ENCODE measurements at regions of chr15 and their contacts with region 1.

Region 1: DNA sequence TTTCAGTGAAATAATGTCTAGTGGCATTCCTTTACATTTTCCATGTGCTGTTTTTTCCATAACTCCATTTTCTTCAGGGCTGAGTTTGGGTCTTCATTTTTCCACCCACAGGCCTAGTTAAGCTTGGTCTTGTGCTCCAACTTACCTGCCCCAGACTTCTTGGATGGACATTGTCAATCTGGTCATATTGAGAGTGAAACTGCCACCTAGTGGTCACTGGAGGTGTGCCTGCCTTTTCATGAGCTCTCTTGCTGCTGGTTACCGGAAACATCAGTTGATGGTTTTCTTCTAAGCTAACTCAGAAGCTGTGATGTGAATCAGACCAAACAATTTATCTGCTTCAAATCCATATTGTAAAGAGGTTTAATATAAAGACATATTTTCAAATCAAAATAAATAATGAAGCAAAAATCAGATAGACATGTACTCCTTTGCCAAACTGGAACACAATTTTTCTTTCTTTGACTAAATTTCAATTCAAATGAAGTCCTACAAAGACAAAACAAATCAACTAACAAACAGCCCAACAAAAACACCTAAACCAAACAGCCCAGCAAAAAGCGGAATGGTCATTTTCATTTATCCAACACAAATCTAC is 135.1 kb upstream of the RASGRP1 start:
- DNase-seq: peak; percentile 77

Region 2: DNA sequence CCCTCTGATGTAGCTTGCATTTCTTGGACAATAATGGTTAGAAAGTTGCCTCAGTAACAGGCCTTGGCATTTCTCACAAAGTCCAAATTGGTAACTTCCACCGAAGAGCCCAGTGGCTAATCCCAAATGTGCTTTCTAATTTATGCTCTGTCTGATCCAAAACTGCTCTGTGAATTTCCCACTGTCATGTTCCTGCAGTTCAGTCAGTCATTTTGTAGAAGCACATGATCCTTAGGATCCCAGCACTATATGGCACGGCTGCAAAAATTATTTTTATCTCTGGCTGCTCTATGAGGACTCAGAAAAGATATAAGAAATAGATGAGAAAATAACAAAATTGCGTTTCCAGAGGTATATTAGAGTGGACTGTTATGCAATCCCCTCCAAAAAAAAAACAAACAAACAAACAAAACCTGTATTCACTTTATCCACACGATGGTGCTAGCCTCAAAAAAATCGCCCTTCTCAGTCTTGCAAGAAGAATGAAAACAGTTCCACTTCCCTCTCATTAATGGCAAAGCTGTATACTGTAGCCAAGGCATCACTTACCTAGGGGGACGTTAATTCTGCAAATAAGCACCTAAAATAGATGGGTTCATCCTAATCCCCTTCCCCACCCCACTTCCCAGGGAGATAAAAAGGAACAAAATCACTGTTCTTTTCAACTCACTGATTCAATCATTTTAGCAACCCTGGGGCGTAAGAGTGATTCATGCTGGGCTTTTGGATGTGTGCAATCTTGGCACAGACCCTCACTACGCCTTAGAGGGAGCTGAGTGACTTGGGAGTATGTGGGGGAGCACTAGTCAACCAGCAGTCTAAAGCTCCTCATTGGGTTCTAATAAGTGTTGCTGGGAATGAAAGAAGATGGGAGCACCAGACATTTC is 704.0 kb before region 1 on chr15:
- in situ Hi-C with region 1: loop called (anchors 25 kb)
- DNase-seq: peak; percentile 75

Region 3: GRCh38 chr15:38378161-38378560 is 321.6 kb before region 1 on chr15:
- in situ Hi-C with region 1: no loop called
- DNase-seq: peak; percentile 12

Region 4: DNA sequence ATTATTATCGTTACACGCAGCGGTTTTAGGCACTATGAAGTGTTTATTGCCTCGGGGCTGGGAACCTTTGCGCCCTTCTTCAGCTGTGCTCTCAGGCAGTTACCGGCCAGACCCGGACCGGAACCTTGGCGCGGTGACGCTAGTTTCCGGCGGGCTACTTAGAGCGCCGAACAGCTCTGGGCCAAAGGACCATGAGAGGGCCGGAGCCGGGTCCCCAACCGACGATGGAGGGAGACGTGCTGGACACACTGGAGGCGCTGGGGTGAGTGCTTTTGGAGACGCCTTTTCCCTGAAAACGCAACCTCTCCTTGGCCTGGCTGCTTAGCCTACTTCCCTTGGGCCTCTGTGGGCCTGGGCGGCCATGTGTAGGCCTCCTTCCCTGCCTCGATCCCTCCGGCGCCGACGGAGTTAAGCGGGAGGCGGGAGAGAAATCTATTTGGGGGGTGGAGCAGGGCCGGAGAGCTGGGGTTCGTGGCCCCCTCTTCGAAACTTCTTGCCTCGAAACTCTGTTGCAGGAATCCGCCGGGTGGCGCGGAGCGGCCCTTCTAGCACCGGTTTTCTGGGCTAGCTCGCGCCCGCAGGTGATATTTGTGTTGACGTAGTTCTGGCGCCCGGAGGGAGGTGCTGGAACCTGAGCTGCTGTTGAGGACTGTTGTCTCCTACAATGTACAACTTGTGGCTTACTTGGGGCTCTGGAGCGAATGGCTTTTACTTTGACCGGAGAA is 245.6 kb before region 1 on chr15 and contains the start of gene FAM98B:
- in situ Hi-C with region 1: loop called (anchors 25 kb)
- DNase-seq: peak; percentile 89

Region 5: DNA sequence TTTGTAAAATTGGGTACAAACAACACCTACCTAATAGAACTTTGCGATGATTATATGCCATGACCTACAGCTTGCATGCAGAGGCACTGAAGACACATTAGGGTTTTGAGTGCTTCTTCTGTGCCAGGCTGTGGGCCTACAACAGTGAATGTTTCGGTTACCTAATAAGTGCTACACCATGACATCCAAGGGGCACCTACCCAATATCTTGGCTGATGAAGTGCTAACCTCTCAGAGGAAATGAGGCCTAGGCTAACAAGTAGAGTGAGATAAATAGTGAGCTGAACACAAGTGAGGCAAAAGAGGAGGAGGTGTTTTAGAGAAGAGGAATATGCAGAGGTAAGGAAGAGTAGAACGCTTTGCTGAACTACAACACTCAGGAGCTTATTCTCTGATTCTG is 122.9 kb before region 1 on chr15:
- in situ Hi-C with region 1: no loop called
- DNase-seq: no peak